ENCODE measurements at regions of chr1 and their contacts with region 1.

Region 1: DNA sequence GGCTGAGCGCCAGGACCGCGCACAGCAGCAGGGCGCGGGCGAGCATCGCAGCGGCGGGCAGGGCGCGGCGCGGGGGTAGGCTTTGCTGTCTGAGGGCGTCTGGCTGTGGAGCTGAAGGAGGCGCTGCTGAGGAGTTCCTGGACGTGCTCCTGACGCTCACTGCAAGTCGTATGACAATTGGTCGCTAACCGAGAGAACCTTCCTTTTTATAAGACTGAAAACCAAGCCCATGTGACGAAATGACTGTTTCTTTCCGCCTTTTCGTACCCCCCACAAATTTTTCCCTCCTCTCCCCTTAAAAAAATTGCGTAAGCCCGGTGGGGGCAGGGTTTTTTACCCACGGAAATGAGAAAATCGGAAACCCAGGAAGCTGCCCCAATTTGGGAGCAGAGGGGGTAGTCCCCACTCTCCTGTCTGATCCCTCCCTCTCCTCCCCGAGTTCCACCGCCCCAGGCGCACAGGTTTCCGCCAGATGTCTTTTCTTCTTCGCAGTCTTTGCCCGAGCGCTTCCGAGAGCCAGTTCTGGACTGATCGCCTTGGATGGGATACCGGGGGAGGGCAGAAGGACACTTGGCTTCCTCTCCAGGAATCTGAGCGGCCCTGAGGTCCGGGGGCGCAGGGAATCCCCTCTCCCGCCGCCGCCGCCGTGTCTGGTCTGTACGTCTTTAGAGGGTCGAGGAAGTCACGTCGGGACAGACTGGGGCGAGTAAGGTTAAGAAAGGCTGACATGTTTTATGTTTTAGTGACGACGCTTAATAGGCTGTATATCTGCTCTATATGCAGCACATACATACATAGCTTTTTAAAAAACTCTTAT is at the start of gene PTGS2:
- H3K4me3 Mint-ChIP-seq: peak within 1 kb of the TSS; percentile 88
- H3K27ac Mint-ChIP-seq: peak within 1 kb of the TSS; percentile 91
- H3K4me1 Mint-ChIP-seq: peaks cover 22% of the 10 kb centered on the region
- H3K27me3 Mint-ChIP-seq: no peaks in the 10 kb centered on the region

Region 2: GRCh38 chr1:186404454-186405051 is 275.9 kb before region 1 on chr1:
- intact Hi-C with region 1: loop called (anchors 10 kb)
- H3K4me3 Mint-ChIP-seq: no peak overlapping the region
- H3K27ac Mint-ChIP-seq: no peak overlapping the region
- H3K4me1 Mint-ChIP-seq: no peaks in the 10 kb centered on the region
- H3K27me3 Mint-ChIP-seq: no peaks in the 10 kb centered on the region

Region 3: DNA sequence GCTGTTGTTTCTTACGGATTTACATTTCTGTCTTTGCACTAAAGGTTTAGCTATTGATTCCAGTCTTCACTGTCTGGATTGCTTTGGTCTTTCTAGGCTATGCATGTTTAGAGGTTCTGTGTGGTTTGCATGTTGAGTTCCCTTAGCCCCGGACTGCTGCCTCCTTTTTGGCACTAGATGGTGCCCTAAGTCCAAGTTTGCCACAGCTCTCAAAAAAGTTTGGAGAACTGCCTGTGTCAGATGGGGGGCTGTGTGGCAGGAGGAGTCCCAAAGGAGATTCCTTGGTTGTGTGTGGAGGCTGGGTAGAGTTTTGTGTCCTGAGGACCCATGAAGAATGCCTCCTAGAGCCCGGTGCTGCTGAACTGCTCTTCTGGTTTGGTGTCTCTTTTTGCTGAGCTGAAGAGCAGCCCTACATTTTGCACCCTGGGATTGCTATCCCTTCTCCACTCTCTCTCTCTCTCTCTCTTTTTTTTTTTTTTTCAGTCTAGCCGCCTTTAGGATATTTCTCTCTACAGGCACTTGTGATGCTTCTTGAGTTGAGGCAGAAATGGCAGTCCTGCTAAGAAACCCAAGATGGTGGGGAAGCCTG is 74.6 kb before region 1 on chr1:
- intact Hi-C with region 1: loop called (anchors 1 kb)
- H3K4me3 Mint-ChIP-seq: no peak overlapping the region
- H3K27ac Mint-ChIP-seq: no peak overlapping the region
- H3K4me1 Mint-ChIP-seq: peaks cover 9% of the 10 kb centered on the region
- H3K27me3 Mint-ChIP-seq: no peaks in the 10 kb centered on the region

Region 4: DNA sequence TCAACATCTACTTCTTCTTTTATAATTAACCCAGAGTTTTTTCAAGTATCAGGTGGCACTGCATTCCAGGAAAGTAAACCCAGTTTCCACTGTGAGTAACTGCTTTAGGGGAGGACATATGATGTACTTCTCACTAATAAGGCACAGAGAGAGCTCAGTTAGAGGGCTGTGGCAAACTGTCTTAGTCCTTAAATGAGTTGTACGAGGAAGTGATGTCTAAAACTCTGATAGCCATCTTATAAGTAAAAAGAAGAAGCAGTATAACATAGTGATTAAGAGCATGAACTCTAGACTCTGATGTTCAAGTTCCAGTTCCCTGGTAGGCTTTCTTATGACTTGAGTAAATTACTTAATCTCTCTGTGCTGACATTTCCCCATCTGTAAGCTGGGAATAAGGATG is 58.5 kb after region 1 on chr1:
- intact Hi-C with region 1: loop called (anchors 10 kb)
- H3K4me3 Mint-ChIP-seq: no peak overlapping the region
- H3K27ac Mint-ChIP-seq: peak overlapping the region; percentile 66
- H3K4me1 Mint-ChIP-seq: peaks cover 24% of the 10 kb centered on the region
- H3K27me3 Mint-ChIP-seq: no peaks in the 10 kb centered on the region

Region 5: DNA sequence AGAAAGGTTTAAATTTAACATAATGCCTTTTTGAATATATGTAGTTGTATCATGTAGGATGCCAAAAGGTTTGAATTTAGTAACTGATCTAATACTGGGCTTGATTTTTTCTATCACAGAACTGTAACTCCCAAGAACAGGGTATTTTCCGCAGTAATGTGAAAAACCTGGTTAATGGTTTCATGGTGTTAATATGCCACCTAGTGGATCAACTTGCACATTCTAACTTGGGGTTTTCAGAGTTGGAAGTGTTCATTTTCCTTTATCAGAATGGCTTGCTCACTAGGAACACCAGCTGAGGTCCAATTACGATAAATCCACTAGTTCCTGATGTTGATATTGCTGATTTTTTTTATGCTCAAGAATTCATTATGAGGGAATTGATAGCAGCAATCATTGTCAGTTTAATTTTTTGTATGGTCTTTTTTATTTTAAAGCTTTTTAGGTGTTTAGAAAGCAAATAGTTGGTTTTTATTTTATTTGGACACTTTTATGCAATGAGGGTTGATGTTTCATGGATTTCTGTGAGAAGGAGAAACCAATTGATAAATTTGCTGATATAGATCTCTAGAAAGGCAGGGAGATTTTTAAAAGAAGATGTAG is 305.5 kb after region 1 on chr1:
- intact Hi-C with region 1: loop called (anchors 5 kb)
- H3K4me3 Mint-ChIP-seq: no peak overlapping the region
- H3K27ac Mint-ChIP-seq: no peak overlapping the region
- H3K4me1 Mint-ChIP-seq: no peaks in the 10 kb centered on the region
- H3K27me3 Mint-ChIP-seq: no peaks in the 10 kb centered on the region

Measured in dendritic cell treated with granulocyte-macrophage colony-stimulating factor and Interleukin-4, amounts not matched to agents 40 ng/mL and 50 ng/mL, for 4 days (primary cell).